ENCODE measurements at regions of chr12 and their contacts with region 1.

Region 1: DNA sequence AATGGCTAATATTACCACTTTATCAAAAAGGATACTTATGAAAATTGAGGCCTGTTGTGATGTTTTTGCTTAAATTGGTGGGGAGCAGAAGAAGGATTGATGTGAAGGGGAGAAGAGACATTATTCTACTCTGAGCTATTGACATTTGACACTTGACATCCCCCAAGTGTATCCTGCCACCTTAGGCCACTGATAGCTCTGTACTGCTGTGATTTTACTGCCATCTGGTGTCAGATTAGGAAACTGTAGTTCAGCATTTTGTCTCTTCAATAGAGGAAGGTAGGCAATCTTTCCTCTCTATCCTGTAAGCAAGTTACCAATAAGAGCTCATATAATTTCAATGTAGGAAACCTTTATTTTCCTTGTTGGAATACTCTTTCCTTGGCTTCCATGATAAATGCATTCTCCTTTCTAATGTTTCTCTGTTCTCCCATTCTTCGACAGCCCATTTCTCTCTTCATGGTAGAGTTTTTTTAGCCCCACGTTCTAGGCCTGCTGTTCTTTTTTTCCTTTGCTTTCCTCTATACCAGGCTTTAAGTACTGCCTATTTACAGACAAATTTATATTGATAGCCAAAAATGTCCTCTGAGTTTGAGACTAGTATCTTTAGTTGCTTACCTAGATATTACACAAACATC is 46.3 kb downstream of the PPHLN1 start:
- DNase-seq: peak; percentile 76
- ATAC-seq: peak; percentile 92
- H3K4me3 ChIP-seq: no peak overlapping the region
- H3K4me3 Mint-ChIP-seq: no peak overlapping the region
- H3K27ac ChIP-seq: no peak overlapping the region
- H3K27ac Mint-ChIP-seq: no peak overlapping the region
- H3K4me1 ChIP-seq: peaks cover 4 to 5% of the 10 kb centered on the region in 2 donors
- H3K4me1 Mint-ChIP-seq: peaks cover 14% of the 10 kb centered on the region
- H3K27me3 ChIP-seq: no peaks in the 10 kb centered on the region
- H3K27me3 Mint-ChIP-seq: no peaks in the 10 kb centered on the region
- CTCF ChIP-seq: peak; percentile 89

Region 2: DNA sequence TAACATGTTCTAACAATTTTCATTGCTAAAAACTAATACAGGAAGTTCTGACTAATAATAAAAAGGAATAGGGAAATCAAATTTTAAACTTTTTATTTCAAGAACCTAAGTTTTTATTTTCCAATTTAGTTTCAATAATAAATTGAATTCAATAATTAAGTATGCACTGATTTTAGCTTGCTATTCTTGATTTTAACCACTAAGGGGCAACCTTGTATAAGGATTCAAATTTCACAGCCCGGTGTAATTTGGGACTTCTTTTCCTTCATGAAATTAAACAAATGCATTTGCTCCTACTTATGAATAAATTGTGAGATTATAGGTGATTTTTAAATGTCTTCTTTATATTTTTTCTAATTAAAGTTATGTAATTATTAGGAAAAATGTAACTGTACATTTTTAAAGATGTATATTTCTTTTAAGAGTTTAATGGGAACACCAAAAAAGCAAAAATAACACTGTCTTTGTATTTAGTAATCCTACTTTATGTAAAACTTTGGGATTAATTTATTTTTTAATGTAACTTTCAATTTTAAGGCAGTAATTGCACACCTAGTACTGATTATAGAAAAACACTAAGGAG is 1425.6 kb before region 1 on chr12:
- CTCF ChIA-PET with region 1: interaction called, 6 read pairs
- POLR2A ChIA-PET with region 1: no interaction called
- intact Hi-C with region 1: loop called (anchors 2 kb)
- DNase-seq: peak; percentile 38
- ATAC-seq: no peak
- H3K4me3 ChIP-seq: no peak overlapping the region
- H3K4me3 Mint-ChIP-seq: no peak overlapping the region
- H3K27ac ChIP-seq: no peak overlapping the region
- H3K27ac Mint-ChIP-seq: no peak overlapping the region
- H3K4me1 ChIP-seq: no peaks in the 10 kb centered on the region
- H3K4me1 Mint-ChIP-seq: no peaks in the 10 kb centered on the region
- H3K27me3 ChIP-seq: peaks cover 0 to 3% (median 0%) of the 10 kb centered on the region in 4 experiments
- H3K27me3 Mint-ChIP-seq: peaks cover 9% of the 10 kb centered on the region
- CTCF ChIP-seq: peak; percentile 88

Region 3: GRCh38 chr12:42129595-42130204 is 242.6 kb before region 1 on chr12:
- CTCF ChIA-PET with region 1: interaction called, 3 read pairs
- POLR2A ChIA-PET with region 1: no interaction called
- intact Hi-C with region 1: loop called (anchors 1 kb)
- DNase-seq: peak; percentile 57
- ATAC-seq: no peak
- H3K4me3 ChIP-seq: no peak overlapping the region
- H3K4me3 Mint-ChIP-seq: no peak overlapping the region
- H3K27ac ChIP-seq: no peak overlapping the region
- H3K27ac Mint-ChIP-seq: no peak overlapping the region
- H3K4me1 ChIP-seq: peaks cover 8 to 12% of the 10 kb centered on the region in 2 donors
- H3K4me1 Mint-ChIP-seq: peaks cover 33% of the 10 kb centered on the region
- H3K27me3 ChIP-seq: no peaks in the 10 kb centered on the region
- H3K27me3 Mint-ChIP-seq: no peaks in the 10 kb centered on the region
- CTCF ChIP-seq: peak; percentile 71

Region 4: DNA sequence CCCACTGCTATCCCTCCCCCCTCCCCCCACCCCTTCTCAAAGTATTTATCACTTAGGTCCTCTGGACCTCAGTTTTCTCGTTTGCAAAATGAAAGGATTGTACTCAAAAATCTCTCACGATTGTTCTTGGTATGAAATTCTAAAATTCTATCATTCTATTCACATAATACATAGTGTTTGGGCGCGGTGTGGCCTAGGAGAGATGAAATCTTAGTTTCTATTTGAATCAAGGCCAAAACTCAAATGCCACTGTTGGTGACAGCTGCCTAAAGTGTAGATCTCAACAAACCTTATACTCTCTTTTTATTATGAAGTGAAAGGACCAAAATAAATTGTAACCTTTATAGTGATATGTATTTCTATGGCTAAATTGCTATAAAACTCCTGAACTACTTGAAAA is 110.6 kb before region 1 on chr12:
- CTCF ChIA-PET with region 1: no interaction called
- POLR2A ChIA-PET with region 1: no interaction called
- intact Hi-C with region 1: no loop called
- DNase-seq: no peak
- ATAC-seq: no peak
- H3K4me3 ChIP-seq: no peak overlapping the region
- H3K4me3 Mint-ChIP-seq: no peak overlapping the region
- H3K27ac ChIP-seq: no peak overlapping the region
- H3K27ac Mint-ChIP-seq: no peak overlapping the region
- H3K4me1 ChIP-seq: no peaks in the 10 kb centered on the region
- H3K4me1 Mint-ChIP-seq: no peaks in the 10 kb centered on the region
- H3K27me3 ChIP-seq: no peaks in the 10 kb centered on the region
- H3K27me3 Mint-ChIP-seq: no peaks in the 10 kb centered on the region
- CTCF ChIP-seq: no peak

Region 5: DNA sequence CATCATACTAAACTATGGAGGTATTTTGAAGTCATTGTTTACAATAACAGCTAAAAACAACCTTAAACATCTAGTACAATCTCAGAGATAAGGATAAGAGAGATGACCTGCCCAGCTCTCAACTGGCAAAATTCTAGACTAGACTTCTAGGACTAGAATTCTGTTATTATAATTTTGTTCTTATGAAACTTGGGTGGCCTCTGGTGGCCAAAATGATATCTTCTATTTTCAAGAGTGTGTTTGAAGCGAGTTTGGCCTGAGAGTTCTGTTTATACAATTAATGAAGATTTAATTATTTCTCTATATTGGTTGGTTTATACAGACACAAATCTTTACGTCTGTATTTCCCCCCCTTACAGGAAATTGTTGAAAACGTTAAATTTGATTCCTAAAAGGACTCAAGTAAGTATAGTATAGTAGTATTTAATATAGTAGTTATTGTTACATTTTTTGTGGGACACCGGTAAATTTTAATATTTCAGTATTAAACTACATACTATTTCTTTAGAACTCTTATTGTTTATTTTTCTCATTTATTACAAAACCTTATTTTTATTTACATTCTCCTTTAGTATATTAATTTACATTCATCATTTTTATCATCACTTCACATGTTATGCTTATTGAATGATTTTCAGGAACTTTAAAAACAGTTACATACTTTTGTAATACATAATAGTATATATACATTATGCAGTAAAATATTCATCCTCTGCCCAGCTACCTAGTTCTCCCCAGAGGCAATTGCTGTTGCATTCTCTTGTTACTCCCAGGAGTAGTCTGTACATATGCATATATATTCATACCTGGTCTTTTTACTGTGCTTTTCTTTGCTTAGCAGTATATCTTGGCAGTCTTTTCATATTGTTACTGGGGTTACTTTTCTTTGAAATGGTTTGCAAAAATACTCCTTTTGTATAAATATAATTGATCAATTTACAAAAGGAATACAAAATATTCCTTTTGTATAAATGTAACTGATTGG is 39.7 kb before region 1 on chr12:
- CTCF ChIA-PET with region 1: interaction called, 16 read pairs
- POLR2A ChIA-PET with region 1: no interaction called
- intact Hi-C with region 1: loop called (anchors 5 kb)
- DNase-seq: peak; percentile 62
- ATAC-seq: peak; percentile 45
- H3K4me3 ChIP-seq: no peak overlapping the region
- H3K4me3 Mint-ChIP-seq: no peak overlapping the region
- H3K27ac ChIP-seq: peak overlapping the region in 1 of 2 donors; percentile 6
- H3K27ac Mint-ChIP-seq: no peak overlapping the region
- H3K4me1 ChIP-seq: peaks cover 20 to 23% of the 10 kb centered on the region in 2 donors
- H3K4me1 Mint-ChIP-seq: peaks cover 57% of the 10 kb centered on the region
- H3K27me3 ChIP-seq: no peaks in the 10 kb centered on the region
- H3K27me3 Mint-ChIP-seq: no peaks in the 10 kb centered on the region
- CTCF ChIP-seq: peak; percentile 79

Region 6: DNA sequence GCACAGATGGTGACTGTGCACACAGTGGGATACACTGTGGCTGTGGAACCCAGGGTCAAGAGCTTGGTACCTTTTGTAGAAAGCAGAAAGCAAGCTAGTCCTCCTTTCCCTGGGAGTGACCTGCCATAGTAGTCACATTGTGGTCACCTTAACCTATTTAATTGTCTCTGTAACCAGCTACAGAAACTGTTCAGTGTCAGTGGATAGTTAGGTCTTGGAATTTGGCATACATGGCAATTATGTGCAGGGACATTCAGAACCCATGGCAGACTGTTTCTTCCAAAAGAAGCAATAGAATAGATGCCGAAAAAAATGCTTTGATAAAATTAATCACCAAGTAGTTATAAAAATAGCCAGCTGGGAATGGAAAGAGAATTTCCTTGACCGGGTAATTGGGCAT is 15.9 kb before region 1 on chr12:
- CTCF ChIA-PET with region 1: interaction called, 12 read pairs
- POLR2A ChIA-PET with region 1: no interaction called
- intact Hi-C with region 1: no loop called
- DNase-seq: no peak
- ATAC-seq: no peak
- H3K4me3 ChIP-seq: no peak overlapping the region
- H3K4me3 Mint-ChIP-seq: no peak overlapping the region
- H3K27ac ChIP-seq: no peak overlapping the region
- H3K27ac Mint-ChIP-seq: no peak overlapping the region
- H3K4me1 ChIP-seq: peaks cover 0 to 5% of the 10 kb centered on the region in 2 donors
- H3K4me1 Mint-ChIP-seq: peaks cover 14% of the 10 kb centered on the region
- H3K27me3 ChIP-seq: no peaks in the 10 kb centered on the region
- H3K27me3 Mint-ChIP-seq: no peaks in the 10 kb centered on the region
- CTCF ChIP-seq: no peak

Region 7: GRCh38 chr12:42421844-42422779 is 49.8 kb after region 1 on chr12:
- CTCF ChIA-PET with region 1: no interaction called
- POLR2A ChIA-PET with region 1: no interaction called
- intact Hi-C with region 1: no loop called
- DNase-seq: no peak
- ATAC-seq: no peak
- H3K4me3 ChIP-seq: no peak overlapping the region
- H3K4me3 Mint-ChIP-seq: no peak overlapping the region
- H3K27ac ChIP-seq: peak overlapping the region in 1 of 2 donors; percentile 25
- H3K27ac Mint-ChIP-seq: no peak overlapping the region
- H3K4me1 ChIP-seq: peaks cover 0 to 5% of the 10 kb centered on the region in 2 donors
- H3K4me1 Mint-ChIP-seq: peaks cover 25% of the 10 kb centered on the region
- H3K27me3 ChIP-seq: no peaks in the 10 kb centered on the region
- H3K27me3 Mint-ChIP-seq: no peaks in the 10 kb centered on the region
- CTCF ChIP-seq: no peak